PC-3 (cell line): ENCODE measurements at regions of chr16 and their contacts with region 1.

Region 1: DNA sequence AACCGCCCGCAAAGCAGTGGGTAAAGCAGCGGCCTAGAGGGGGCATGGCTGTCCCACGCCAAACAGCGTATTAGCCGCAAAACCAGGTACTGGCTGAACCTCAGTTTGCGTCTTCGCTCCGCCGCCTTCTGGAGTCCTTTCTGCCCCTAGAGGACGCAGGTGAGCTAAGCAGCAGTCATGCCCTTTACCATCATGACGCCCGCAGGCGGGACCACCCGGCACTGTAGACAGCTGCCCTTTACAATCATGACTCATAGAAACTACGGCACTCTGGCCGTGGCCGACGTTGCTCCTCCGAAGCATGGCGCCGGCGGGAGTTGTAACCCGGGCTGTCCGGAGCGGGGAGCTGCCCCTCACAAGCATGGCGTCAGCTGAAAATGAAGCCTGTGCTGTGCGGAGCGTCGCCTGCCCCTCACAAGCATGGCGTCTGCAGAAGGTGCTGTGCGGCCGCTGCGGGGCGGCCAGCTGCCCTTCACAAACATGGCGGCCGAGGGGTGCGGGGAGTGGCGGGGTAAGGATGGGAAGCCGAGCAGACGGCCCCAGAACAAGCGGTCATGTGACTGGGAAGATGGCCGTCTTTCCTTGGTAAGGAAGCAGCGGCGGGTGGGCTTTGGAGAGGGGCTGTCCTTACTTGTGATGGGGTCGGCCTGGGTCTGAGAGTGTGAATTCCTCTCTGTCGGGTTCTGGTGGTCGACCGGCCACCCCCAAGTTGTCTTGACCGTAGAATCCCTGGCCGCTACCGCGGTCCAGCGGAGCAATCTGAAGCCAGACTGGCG is at the start of gene VPS35L:
- DNase-seq: peak; percentile 91
- ATAC-seq: peak; percentile 98
- H3K4me3 ChIP-seq: peak within 1 kb of the TSS; percentile 74
- H3K27ac ChIP-seq: no peak within 1 kb of the TSS
- H3K4me1 ChIP-seq: no peaks in the 10 kb centered on the region; the same call in 1 of the 2 replicates
- H3K27me3 ChIP-seq: no peaks in the 10 kb centered on the region
- CTCF ChIP-seq: peak; percentile 61
- total RNA-seq, gene VPS35L: 2.9 and 9.1 TPM in 2 replicates

Region 2: GRCh38 chr16:19419691-19420060 is 135.7 kb before region 1 on chr16:
- CTCF ChIA-PET with region 1: interaction called, 14 read pairs
- POLR2A ChIA-PET with region 1: no interaction called
- intact Hi-C with region 1: no loop called
- DNase-seq: peak; percentile 98
- ATAC-seq: peak; percentile 91
- H3K4me3 ChIP-seq: no peak overlapping the region
- H3K27ac ChIP-seq: peak overlapping the region; percentile 87
- H3K4me1 ChIP-seq: peaks cover 22% of the 10 kb centered on the region
- H3K27me3 ChIP-seq: no peaks in the 10 kb centered on the region
- CTCF ChIP-seq: no peak

Region 3: GRCh38 chr16:19502395-19503131 is 52.8 kb before region 1 on chr16:
- CTCF ChIA-PET with region 1: no interaction called
- POLR2A ChIA-PET with region 1: no interaction called
- intact Hi-C with region 1: no loop called
- DNase-seq: peak; percentile 74
- ATAC-seq: peak; percentile 77
- H3K4me3 ChIP-seq: no peak overlapping the region
- H3K27ac ChIP-seq: no peak overlapping the region
- H3K4me1 ChIP-seq: peaks cover 29% of the 10 kb centered on the region
- H3K27me3 ChIP-seq: no peaks in the 10 kb centered on the region
- CTCF ChIP-seq: peak; percentile 79

Region 4: GRCh38 chr16:19521471-19522396 is 33.6 kb before region 1 on chr16 and contains the start of gene GDE1:
- CTCF ChIA-PET with region 1: interaction called, 3 read pairs
- POLR2A ChIA-PET with region 1: no interaction called
- intact Hi-C with region 1: loop called (anchors 5 kb)
- DNase-seq: peak; percentile 81
- ATAC-seq: peak; percentile 61
- H3K4me3 ChIP-seq: peak within 1 kb of the TSS; percentile 94
- H3K27ac ChIP-seq: peak within 1 kb of the TSS; percentile 90
- H3K4me1 ChIP-seq: peaks cover 59% of the 10 kb centered on the region
- H3K27me3 ChIP-seq: no peaks in the 10 kb centered on the region
- CTCF ChIP-seq: peak; percentile 43
- total RNA-seq, gene GDE1: 45.6 and 50.7 TPM in 2 replicates

Region 5: GRCh38 chr16:19583665-19584300 is 28.4 kb after region 1 on chr16:
- CTCF ChIA-PET with region 1: interaction called, 13 read pairs
- POLR2A ChIA-PET with region 1: no interaction called
- intact Hi-C with region 1: no loop called
- DNase-seq: peak; percentile 58
- ATAC-seq: peak; percentile 77
- H3K4me3 ChIP-seq: no peak overlapping the region
- H3K27ac ChIP-seq: no peak overlapping the region
- H3K4me1 ChIP-seq: no peaks in the 10 kb centered on the region
- H3K27me3 ChIP-seq: no peaks in the 10 kb centered on the region
- CTCF ChIP-seq: peak; percentile 86

Region 6: GRCh38 chr16:19601083-19601976 is 46.0 kb after region 1 on chr16:
- CTCF ChIA-PET with region 1: interaction called, 6 read pairs
- POLR2A ChIA-PET with region 1: no interaction called
- intact Hi-C with region 1: loop called (anchors 2 kb)
- DNase-seq: peak; percentile 47
- ATAC-seq: no peak
- H3K4me3 ChIP-seq: no peak overlapping the region
- H3K27ac ChIP-seq: no peak overlapping the region
- H3K4me1 ChIP-seq: peaks cover 21% of the 10 kb centered on the region; the same call in 1 of the 2 replicates
- H3K27me3 ChIP-seq: no peaks in the 10 kb centered on the region
- CTCF ChIP-seq: peak; percentile 79

Region 7: GRCh38 chr16:19886073-19886941 is 331.0 kb after region 1 on chr16:
- CTCF ChIA-PET with region 1: no interaction called
- POLR2A ChIA-PET with region 1: no interaction called
- intact Hi-C with region 1: loop called (anchors 5 kb)
- DNase-seq: peak; percentile 83
- ATAC-seq: peak; percentile 36
- H3K4me3 ChIP-seq: no peak overlapping the region
- H3K27ac ChIP-seq: no peak overlapping the region
- H3K4me1 ChIP-seq: peaks cover 4% of the 10 kb centered on the region; the same call in 1 of the 2 replicates
- H3K27me3 ChIP-seq: no peaks in the 10 kb centered on the region
- CTCF ChIP-seq: peak; percentile 95

Region 8: DNA sequence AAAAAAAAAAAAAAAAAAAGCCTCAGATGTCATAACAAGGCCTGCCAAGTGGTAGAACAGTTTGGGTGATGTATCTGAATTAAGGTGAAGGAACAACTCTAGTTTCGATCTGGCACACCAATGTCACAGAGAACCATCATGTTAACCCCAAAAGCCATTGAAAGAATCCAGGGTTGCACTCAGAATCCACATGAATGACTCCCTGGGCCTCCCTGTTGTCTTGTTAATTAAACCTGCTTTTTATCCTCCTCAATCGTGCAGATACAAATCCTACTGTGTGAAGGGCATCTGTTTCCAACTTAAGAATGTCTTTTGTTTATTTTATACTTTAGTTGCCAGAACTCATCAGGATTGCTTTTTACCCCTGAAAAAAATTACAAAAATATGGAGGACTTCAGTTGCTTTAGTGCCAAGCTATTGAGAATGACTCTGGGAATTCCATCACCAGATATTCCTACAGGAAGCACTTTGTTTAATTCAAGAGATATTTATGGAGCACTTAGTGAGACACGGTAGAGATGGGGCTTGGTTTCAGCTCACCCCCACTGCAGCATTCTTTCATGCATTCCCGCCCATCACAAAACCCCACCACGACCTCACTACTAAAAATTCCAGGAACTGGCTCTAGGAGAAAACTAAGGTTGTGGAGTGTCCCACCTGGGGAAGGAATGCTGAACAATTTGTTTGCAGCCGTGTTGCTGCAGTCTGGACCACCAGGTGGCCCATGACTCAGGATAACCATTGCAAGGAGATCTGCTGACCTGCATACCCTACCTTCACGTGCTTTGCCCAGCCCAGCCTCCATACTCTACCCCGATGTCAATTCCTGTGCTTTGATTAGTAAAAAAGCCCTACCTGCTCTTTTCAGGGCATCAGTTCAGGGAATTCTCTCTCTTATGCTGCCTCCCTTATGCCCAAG is 393.1 kb after region 1 on chr16:
- CTCF ChIA-PET with region 1: no interaction called
- POLR2A ChIA-PET with region 1: no interaction called
- intact Hi-C with region 1: no loop called
- DNase-seq: no peak
- ATAC-seq: no peak
- H3K4me3 ChIP-seq: no peak overlapping the region
- H3K27ac ChIP-seq: no peak overlapping the region
- H3K4me1 ChIP-seq: no peaks in the 10 kb centered on the region
- H3K27me3 ChIP-seq: peaks cover 23% of the 10 kb centered on the region
- CTCF ChIP-seq: no peak